GM13976 (cell line): ENCODE measurements at regions of chr10 and their contacts with region 1.

Region 1: GRCh38 chr10:119416855-119417254 is 125.7 kb downstream of the RGS10 start:
- DNase-seq: peak; percentile 92
- CTCF ChIP-seq: peak; percentile 72

Region 2: GRCh38 chr10:119199231-119199992 is 217.4 kb before region 1 on chr10:
- in situ Hi-C with region 1: loop called (anchors 10 kb)
- DNase-seq: peak; percentile 49
- CTCF ChIP-seq: peak; percentile 62

Region 3: DNA sequence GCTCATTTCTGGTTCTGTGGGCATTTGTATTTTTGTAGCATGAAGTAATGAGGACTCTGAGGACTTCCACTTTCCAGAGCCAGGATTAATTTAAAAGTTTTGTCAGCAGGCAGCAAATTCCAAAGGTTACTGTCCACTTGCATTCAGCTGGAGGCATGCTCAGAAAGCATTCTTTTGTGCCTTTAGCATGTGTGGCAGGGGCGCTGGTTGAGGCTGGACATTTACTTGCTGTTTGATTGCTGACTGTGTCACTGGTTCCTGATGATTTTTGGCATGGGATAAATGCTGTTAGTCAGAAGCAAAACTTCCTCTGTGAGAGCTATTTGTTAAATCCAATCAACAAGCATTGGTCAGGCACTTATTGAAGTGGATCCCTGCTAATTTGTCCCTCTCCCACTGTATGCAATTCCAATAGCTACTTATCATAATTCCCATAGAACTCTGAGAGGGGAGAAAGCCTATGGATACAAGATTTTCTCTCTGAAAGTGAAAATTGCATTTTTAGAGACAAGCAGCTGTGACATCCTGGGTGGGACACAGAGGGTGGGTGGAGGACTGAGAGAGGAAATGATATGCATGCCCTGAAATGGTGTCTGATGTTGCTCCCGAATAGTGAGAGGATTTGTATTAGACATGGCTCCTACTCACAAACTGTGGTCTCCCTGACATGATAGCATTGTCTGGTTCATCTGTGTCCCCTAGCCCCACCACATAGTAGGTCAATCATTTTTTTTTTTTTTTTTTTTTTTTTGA is 1273.1 kb after region 1 on chr10:
- in situ Hi-C with region 1: no loop called
- DNase-seq: no peak
- CTCF ChIP-seq: no peak